ENCODE measurements at regions of chr12 and their contacts with region 1.

Region 1: GRCh38 chr12:65156366-65156841 is 13.0 kb upstream of the LEMD3 start:
- DNase-seq: peak; percentile 14
- H3K4me3 Mint-ChIP-seq: peak overlapping the region; percentile 9
- H3K27ac Mint-ChIP-seq: peak overlapping the region; percentile 35
- H3K4me1 Mint-ChIP-seq: peaks cover 16% of the 10 kb centered on the region
- H3K27me3 Mint-ChIP-seq: peaks cover 13% of the 10 kb centered on the region

Region 2: DNA sequence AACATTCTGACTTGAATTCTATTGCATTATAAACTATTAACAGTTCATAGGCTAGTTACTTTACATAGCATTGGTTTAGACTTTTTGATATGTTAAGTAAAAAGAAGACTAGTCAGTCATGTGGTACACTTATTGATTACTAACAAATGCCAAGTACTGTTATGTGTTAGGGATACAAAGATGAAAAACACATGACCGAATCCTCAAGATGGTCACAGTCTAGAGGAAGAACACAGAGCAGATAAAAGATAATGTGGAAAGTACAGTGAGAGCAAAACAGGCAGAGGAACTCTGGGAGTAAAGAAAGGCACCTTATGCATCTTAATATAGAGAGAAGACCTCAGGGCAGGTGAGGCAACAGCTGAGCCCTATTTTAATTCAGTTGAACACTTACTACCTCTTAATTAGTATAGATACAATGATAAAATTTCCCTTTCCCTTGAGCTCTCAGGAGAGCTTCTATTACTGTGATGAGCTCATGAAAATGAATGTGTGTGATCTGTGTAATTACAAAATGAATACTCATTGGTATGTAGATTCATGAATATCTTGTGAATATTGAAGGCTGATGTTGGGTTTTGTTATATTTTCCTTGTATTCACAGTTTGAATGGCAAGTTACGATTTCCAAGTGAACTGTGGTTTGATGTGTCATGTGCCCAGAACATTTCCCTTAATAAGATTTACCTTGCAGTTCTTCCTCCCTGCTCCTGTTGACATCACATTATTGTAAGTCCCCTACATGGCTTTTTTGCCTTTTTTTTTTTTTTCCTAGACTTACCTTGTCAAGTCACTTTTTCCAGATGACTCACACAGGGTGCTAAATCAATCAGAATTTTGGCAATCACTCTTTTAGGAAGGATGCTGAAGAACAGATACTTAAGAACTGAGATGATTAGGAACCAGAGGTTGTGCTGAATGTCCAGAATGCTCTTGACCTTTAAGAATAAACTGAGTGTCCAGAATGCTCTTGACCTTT is 92.5 kb after region 1 on chr12:
- CTCF ChIA-PET with region 1: no interaction called
- POLR2A ChIA-PET with region 1: no interaction called
- intact Hi-C with region 1: loop called (anchors 1 kb)
- DNase-seq: no peak
- H3K4me3 Mint-ChIP-seq: no peak overlapping the region
- H3K27ac Mint-ChIP-seq: peak overlapping the region; percentile 71
- H3K4me1 Mint-ChIP-seq: peaks cover 17% of the 10 kb centered on the region
- H3K27me3 Mint-ChIP-seq: no peaks in the 10 kb centered on the region

Region 3: DNA sequence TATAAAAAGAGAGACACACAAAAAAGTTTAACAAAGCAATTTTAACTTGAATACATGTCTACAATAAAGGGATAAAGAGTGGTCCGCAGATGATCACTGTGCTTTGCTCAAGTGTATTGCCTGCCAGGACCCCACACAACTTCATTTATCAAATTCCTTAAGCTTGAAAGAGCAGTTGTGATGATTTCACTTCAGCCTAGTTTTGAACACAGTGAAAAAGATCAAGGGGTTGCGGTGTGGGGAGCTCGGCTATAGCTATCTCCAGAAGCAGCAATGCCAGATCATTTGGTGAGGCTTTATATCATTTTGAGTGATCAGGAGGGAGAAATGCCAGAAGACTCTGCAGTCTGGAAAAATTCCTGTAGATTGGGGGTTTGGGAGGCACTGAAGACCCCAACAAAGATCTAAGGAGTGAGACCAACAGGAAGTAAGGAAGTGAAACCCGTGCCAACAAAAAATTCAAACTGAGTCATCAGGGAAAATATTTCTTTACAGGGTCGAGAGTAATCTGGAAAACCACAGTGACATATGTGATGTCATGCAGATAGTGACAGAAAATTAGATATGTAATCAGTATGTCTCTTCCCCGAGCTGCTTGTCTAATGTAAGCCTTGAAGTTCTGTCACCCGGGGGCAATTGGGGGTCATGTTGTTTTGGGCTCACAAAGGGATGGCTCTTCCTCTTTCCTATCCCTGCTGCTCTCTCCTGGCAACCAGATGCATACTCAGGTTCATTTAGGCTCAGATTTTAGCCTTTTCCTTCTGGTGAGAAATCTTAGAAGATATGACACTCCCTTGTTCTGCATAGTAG is 343.9 kb after region 1 on chr12:
- CTCF ChIA-PET with region 1: no interaction called
- POLR2A ChIA-PET with region 1: no interaction called
- intact Hi-C with region 1: no loop called
- DNase-seq: no peak
- H3K4me3 Mint-ChIP-seq: no peak overlapping the region
- H3K27ac Mint-ChIP-seq: no peak overlapping the region
- H3K4me1 Mint-ChIP-seq: no peaks in the 10 kb centered on the region
- H3K27me3 Mint-ChIP-seq: peaks cover 3% of the 10 kb centered on the region

Measured in activated CD4-positive, alpha-beta memory T cell treated with anti-CD3 and anti-CD28 coated beads for 36 hours (primary cell).